ENCODE measurements at regions of chr10 and their contacts with region 1.

Region 1: DNA sequence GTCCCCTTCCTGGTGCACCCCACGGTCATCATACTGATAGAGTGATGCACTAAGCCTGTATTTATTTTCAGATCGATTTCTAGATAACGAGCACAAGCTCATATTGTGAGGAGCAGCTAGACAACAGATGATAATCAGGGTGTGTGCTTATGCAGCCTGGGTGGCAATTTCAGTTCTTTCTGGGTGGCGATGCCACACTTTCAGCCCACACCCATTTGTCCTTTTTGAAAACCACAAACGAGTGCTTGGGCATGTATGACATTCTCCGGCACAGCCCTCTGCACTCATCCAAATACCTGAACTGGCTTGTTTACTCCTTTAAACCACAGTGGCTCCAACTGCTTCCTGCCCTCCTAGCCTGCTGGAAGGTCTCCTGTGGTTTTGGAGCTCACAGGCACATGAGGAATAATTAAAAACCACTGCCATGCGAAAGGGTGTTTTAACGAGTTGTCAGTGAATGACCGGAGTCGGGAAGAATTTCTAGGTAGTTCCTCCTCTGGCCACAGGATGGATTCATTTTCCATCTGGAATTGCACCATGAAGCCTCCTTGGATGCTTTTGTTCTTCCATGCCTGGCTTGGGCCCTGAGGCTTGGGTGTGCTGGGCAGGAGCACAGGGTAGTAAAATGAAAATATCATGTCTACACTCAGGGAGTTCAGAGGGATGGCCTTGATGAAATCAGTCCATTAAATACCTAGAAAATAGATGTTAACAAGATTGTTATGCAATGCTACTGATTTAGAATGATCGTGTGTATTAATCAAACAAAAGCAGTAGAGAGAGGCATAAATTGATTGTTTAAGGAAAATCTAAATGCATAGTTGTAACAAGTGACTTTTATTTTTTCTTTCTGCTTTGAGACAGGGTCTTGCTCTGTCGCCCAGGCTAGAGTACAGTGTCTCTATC is 52.4 kb upstream of the ITGB1 start:
- DNase-seq: peak in 2 of 4 donors; percentile 20 to 27
- ATAC-seq: peak; percentile 43
- H3K4me3 ChIP-seq: no peak overlapping the region
- H3K27ac ChIP-seq: peak overlapping the region in 2 of 4 donors; percentile 59 to 64
- H3K4me1 ChIP-seq: peaks cover 8% of the 10 kb centered on the region
- H3K27me3 ChIP-seq: no peaks in the 10 kb centered on the region
- CTCF ChIP-seq: peak in 5 of 7 experiments; percentile 9 to 45 (median 35)
- POLR2A ChIP-seq: no peak

Region 2: GRCh38 chr10:32308027-32308603 is 702.3 kb before region 1 on chr10:
- intact Hi-C with region 1: no loop called
- DNase-seq: no peak
- ATAC-seq: no peak
- H3K4me3 ChIP-seq: no peak overlapping the region
- H3K27ac ChIP-seq: no peak overlapping the region
- H3K4me1 ChIP-seq: peaks cover 26% of the 10 kb centered on the region
- H3K27me3 ChIP-seq: no peaks in the 10 kb centered on the region
- CTCF ChIP-seq: no peak
- POLR2A ChIP-seq: no peak

Region 3: GRCh38 chr10:32790483-32790882 is 219.9 kb before region 1 on chr10:
- intact Hi-C with region 1: loop called (anchors 5 kb)
- DNase-seq: no peak
- ATAC-seq: no peak
- H3K4me3 ChIP-seq: no peak overlapping the region
- H3K27ac ChIP-seq: no peak overlapping the region
- H3K4me1 ChIP-seq: no peaks in the 10 kb centered on the region
- H3K27me3 ChIP-seq: no peaks in the 10 kb centered on the region
- CTCF ChIP-seq: no peak
- POLR2A ChIP-seq: no peak

Region 4: DNA sequence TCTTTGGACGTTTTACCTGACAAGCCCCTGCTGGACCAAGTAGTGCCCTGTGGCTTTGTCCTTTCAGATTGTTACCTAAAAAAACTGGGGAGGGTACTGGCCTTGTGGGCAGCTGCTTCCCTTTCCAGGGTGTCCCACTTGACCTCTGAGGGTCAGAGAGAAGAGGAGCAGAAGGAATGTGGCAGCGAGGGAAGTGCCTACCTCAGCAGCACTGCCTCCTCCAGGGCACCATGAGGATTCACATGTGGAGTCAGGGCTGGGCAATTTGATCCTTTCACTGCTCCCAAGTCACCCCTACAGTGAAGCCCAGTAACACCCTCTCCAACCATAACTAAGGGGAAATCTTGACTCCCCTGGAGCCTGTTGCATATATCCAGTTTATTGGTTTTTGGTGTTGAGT is 117.0 kb before region 1 on chr10:
- intact Hi-C with region 1: no loop called
- DNase-seq: no peak
- ATAC-seq: no peak
- H3K4me3 ChIP-seq: no peak overlapping the region
- H3K27ac ChIP-seq: no peak overlapping the region
- H3K4me1 ChIP-seq: no peaks in the 10 kb centered on the region
- H3K27me3 ChIP-seq: no peaks in the 10 kb centered on the region
- CTCF ChIP-seq: no peak
- POLR2A ChIP-seq: no peak

Measured in body of pancreas (tissue), 4 donors.